ENCODE measurements at regions of chr21 and their contacts with region 1.

Region 1: GRCh38 chr21:36927719-36928117 is 38.8 kb downstream of the HLCS start:
- DNase-seq: peak; percentile 69 to 88
- ATAC-seq: peak; percentile 85 to 95 (median 88)
- H3K4me3 ChIP-seq: no peak overlapping the region
- H3K27ac ChIP-seq: no peak overlapping the region
- H3K4me1 ChIP-seq: peaks cover 11% of the 10 kb centered on the region
- H3K27me3 ChIP-seq: no peaks in the 10 kb centered on the region
- CTCF ChIP-seq: peak; percentile 95

Region 2: DNA sequence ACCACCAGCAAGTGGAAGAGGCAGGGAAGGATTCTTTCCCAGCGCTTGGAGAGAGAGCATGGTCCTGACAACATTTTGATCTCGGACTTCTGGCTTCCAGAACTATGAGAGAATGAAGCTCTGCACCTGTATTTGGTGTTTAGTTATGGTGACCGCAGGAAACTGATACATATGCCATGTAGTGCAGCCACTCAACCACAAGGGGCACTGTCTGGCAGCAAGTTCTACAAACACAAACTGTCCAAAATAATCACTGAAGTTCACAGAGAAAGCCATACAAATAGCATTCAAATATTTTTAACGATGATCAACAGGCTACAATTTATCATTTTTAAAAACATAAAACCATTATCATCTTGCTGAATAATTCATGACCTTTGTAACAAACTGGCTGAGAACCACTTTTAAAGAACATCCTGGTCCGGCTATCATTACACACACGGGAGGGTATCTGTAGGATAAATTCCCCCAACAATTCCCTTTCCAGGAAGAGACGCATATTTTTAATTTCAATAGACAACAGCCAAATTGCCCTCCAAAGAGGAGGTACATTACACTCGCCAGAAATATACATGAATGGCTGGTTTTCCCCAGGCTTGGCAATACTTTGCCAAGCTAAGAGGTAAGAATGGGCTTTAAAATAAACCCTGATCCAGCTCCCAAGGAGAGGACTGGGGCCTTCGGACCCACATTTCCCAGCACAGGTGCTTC is 802.1 kb before region 1 on chr21:
- intact Hi-C with region 1: no loop called
- DNase-seq: peak; percentile 56 to 66
- ATAC-seq: peak; percentile 54 to 71 (median 62)
- H3K4me3 ChIP-seq: no peak overlapping the region
- H3K27ac ChIP-seq: no peak overlapping the region
- H3K4me1 ChIP-seq: peaks cover under 1% of the 10 kb centered on the region
- H3K27me3 ChIP-seq: peaks cover 0 to 5% (median 0%) of the 10 kb centered on the region in 3 donors
- CTCF ChIP-seq: peak; percentile 93

Region 3: GRCh38 chr21:36419996-36420395 is 507.7 kb before region 1 on chr21:
- intact Hi-C with region 1: loop called (anchors 5 to 10 kb)
- DNase-seq: peak; percentile 84 to 89
- ATAC-seq: peak; percentile 88 to 95 (median 92)
- H3K4me3 ChIP-seq: no peak overlapping the region
- H3K27ac ChIP-seq: no peak overlapping the region
- H3K4me1 ChIP-seq: no peaks in the 10 kb centered on the region
- H3K27me3 ChIP-seq: no peaks in the 10 kb centered on the region
- CTCF ChIP-seq: peak; percentile 87

Region 4: GRCh38 chr21:36429947-36430546 is 497.7 kb before region 1 on chr21:
- intact Hi-C with region 1: loop called in 1 of 2 experiments (anchors 10 kb)
- DNase-seq: peak; percentile 90 to 95
- ATAC-seq: peak; percentile 94 to 98 (median 96)
- H3K4me3 ChIP-seq: peak overlapping the region; percentile 63
- H3K27ac ChIP-seq: peak overlapping the region; percentile 94
- H3K4me1 ChIP-seq: peaks cover 20% of the 10 kb centered on the region
- H3K27me3 ChIP-seq: no peaks in the 10 kb centered on the region
- CTCF ChIP-seq: peak; percentile 11

Region 5: DNA sequence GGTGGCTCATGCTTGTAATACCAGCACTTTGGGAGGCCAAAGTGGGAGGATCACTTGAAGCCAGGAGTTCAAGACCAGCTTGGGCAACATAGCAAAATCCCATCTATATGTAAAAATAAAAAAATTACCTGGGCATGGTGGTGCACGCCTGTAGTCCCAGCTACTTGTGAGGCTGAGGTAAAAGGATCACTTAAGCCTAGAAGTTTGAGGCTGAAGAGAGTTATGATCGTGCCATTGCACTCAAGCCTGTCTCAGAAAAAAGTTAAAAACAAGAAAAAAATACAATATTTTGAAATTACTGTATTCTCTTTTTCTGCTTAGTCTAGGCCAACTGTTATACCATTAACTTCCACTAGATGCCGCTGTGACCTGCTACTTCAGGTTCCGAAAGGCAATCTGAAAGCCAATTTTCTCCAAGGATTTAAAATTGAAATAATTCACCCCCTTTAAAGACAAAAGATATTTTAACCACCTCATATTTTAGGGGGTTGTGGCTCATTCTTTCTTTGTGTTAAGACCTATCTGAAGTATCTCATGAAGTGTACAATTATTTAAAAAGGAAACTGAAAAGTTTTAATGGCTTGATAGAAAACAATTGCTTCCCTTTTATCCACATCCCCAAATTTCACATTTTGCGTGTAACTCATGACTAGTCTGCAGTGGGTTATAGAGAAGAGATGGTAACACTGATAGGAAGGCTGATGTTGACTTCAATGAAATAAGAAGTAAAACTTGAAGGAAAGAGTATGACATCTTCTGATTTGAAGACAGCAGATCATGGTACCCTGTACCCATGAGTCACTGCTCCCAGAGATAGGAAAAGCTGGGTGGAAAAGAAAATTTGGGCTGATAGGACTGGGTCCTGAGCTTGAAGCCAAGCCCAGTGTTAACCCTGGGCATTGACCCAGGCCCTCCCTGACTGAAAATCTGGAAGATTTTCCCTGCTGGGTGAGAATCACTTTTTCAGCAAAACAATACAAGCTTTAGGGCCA is 423.4 kb before region 1 on chr21:
- intact Hi-C with region 1: loop called (anchors 2 to 5 kb)
- DNase-seq: no peak
- ATAC-seq: peak in 3 of 4 donors; percentile 11 to 57 (median 48)
- H3K4me3 ChIP-seq: no peak overlapping the region
- H3K27ac ChIP-seq: no peak overlapping the region
- H3K4me1 ChIP-seq: no peaks in the 10 kb centered on the region
- H3K27me3 ChIP-seq: no peaks in the 10 kb centered on the region
- CTCF ChIP-seq: peak; percentile 92

Region 6: DNA sequence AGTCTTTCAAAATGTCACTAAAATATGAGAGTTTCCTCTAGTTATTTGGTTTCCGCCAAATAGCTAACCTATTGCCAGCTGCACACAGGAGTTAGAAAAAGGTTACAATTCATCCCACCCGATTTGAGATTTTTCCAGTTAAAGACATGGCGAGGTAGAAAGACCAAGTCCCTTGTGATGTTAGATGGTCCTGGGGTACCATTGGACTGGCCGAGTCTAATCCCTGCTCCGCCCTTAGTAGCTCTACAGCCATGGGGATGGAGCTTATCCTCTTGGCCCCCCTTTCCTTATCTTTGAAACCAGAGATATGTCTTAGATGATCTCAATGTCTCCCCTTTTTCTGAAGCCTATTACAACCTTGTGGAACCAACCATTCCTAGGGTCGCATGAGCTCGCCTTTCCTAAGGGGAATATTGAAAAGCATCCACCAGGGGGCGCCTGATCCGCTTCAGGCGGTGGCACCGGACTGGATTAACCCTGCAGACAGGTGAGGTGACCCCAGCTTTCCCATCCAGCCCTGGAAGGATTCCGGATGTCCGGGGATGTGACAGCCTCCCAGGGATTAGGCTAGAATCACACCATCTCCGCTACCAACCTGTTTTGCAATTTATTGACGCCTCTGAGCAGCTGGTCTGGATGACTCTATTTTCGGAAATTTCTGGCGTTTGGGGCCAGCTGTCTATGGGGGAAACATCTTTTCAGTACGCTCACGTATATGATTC is 297.1 kb before region 1 on chr21:
- intact Hi-C with region 1: loop called (anchors 2 to 5 kb)
- DNase-seq: peak in 1 of 2 donors; percentile 46
- ATAC-seq: peak in 3 of 4 donors; percentile 66 to 72 (median 70)
- H3K4me3 ChIP-seq: no peak overlapping the region
- H3K27ac ChIP-seq: no peak overlapping the region
- H3K4me1 ChIP-seq: no peaks in the 10 kb centered on the region
- H3K27me3 ChIP-seq: peaks cover 0 to 8% (median 2%) of the 10 kb centered on the region in 3 donors
- CTCF ChIP-seq: peak; percentile 71

Region 7: DNA sequence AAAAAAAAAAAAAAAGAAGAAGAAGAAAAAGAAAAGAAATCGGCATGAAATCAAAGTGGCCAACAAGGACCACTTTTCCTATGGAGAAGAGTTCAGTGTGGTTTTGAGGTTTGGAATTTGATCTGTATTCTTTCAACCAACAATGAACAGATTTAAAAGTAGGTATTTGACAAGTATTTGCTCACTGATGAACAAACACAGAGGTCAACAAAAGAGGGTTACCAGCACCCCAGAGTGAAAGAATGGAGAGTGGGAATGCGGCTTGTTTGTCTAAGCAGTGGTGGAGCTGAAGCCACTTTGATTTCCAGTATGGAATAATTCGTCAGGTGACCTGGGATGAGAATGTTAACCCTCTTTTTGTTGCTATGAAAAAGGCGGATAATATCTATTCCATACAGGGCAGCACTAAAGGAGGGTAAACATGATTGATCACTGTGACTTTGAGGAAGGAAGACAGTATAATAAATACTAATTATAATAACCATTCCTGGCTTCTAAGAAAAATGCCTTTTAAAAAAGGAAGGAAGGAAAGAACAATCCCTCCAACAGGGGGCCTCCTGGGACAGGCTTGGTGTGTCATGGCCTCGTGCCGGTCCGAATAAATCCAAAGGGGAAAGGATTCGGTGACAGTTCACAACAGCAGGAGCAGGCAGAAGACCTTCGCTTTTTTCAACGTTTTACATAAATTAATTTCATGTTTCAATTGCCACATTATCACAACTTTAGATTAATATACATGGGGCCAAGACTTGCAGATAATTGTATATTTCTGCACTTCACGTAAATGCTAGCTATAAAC is 266.0 kb before region 1 on chr21:
- intact Hi-C with region 1: loop called in 1 of 2 experiments (anchors 2 kb)
- DNase-seq: peak in 1 of 2 donors; percentile 18
- ATAC-seq: peak in 3 of 4 donors; percentile 47 to 63 (median 58)
- H3K4me3 ChIP-seq: no peak overlapping the region
- H3K27ac ChIP-seq: no peak overlapping the region
- H3K4me1 ChIP-seq: no peaks in the 10 kb centered on the region
- H3K27me3 ChIP-seq: peaks cover 0 to 26% (median 2%) of the 10 kb centered on the region in 3 donors
- CTCF ChIP-seq: peak; percentile 42

Region 8: DNA sequence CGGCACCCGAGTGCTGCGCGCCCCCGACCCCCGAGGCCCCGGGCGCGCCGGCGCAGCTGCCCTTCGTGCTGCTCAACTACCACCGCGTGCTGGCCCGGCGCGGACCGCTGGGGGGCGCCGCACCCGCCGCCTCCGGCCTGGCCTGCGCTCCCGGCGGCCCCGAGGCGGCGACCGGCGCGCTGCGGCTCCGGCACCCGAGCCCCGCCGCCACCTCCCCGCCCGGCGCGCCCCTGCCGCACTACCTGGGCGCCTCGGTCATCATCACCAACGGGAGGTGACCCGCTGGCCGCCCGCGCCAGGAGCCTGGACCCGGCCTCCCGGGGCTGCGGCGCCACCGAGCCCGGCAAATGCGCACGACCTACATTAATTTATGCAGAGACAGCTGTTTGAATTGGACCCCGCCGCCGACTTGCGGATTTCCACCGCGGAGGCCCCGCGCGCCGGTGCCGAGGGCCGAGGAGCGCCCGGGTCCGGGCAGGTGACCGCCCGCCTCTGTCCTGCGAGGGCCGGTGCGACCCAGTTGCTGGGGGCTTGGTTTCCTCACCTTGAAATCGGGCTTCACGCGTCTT is 179.8 kb before region 1 on chr21:
- intact Hi-C with region 1: loop called (anchors 2 to 5 kb)
- DNase-seq: peak; percentile 40 to 64
- ATAC-seq: peak; percentile 68 to 84 (median 76)
- H3K4me3 ChIP-seq: peak overlapping the region; percentile 64
- H3K27ac ChIP-seq: no peak overlapping the region
- H3K4me1 ChIP-seq: peaks cover 9% of the 10 kb centered on the region
- H3K27me3 ChIP-seq: peaks cover 0 to 34% (median 0%) of the 10 kb centered on the region in 3 donors
- CTCF ChIP-seq: peak; percentile 37

Measured in psoas muscle (tissue), 8 donors.